PC-9 (cell line): ENCODE measurements at regions of chr1 and their contacts with region 1.

Region 1: GRCh38 chr1:233440951-233441401 is 113.5 kb downstream of the MAP3K21 start:
- DNase-seq: peak; percentile 47 to 72
- H3K4me3 ChIP-seq: no peak overlapping the region
- H3K27ac ChIP-seq: no peak overlapping the region
- H3K4me1 ChIP-seq: peaks cover 9% of the 10 kb centered on the region; the same call in 1 of the 2 replicates
- H3K27me3 ChIP-seq: no peaks in the 10 kb centered on the region
- CTCF ChIP-seq: peak; percentile 81

Region 2: GRCh38 chr1:233304489-233305102 is 136.4 kb before region 1 on chr1:
- CTCF ChIA-PET with region 1: no interaction called
- POLR2A ChIA-PET with region 1: no interaction called
- intact Hi-C with region 1: no loop called
- DNase-seq: no peak
- H3K4me3 ChIP-seq: no peak overlapping the region
- H3K27ac ChIP-seq: no peak overlapping the region
- H3K4me1 ChIP-seq: no peaks in the 10 kb centered on the region
- H3K27me3 ChIP-seq: no peaks in the 10 kb centered on the region
- CTCF ChIP-seq: peak; percentile 78

Region 3: GRCh38 chr1:233490488-233490887 is 49.5 kb after region 1 on chr1:
- CTCF ChIA-PET with region 1: no interaction called
- POLR2A ChIA-PET with region 1: no interaction called
- intact Hi-C with region 1: no loop called
- DNase-seq: no peak
- H3K4me3 ChIP-seq: no peak overlapping the region
- H3K27ac ChIP-seq: no peak overlapping the region
- H3K4me1 ChIP-seq: 0 out of 2 replicates have a peak, but pooled peaks cover 4% of the 10 kb centered on the region
- H3K27me3 ChIP-seq: no peaks in the 10 kb centered on the region
- CTCF ChIP-seq: no peak

Region 4: GRCh38 chr1:233656032-233656620 is 215.2 kb after region 1 on chr1:
- CTCF ChIA-PET with region 1: no interaction called
- POLR2A ChIA-PET with region 1: no interaction called
- intact Hi-C with region 1: loop called (anchors 10 kb)
- DNase-seq: peak; percentile 17 to 46
- H3K4me3 ChIP-seq: peak overlapping the region; percentile 37; the same call in 1 of the 2 replicates
- H3K27ac ChIP-seq: peak overlapping the region; percentile 96
- H3K4me1 ChIP-seq: peaks cover 75% of the 10 kb centered on the region
- H3K27me3 ChIP-seq: no peaks in the 10 kb centered on the region
- CTCF ChIP-seq: no peak

Region 5: GRCh38 chr1:233707153-233707879 is 266.3 kb after region 1 on chr1:
- CTCF ChIA-PET with region 1: interaction called, 5 read pairs
- POLR2A ChIA-PET with region 1: no interaction called
- intact Hi-C with region 1: loop called (anchors 10 kb)
- DNase-seq: peak; percentile 81 to 99
- H3K4me3 ChIP-seq: peak overlapping the region; percentile 26; the same call in 1 of the 2 replicates
- H3K27ac ChIP-seq: peak overlapping the region; percentile 84
- H3K4me1 ChIP-seq: peaks cover 67% of the 10 kb centered on the region
- H3K27me3 ChIP-seq: no peaks in the 10 kb centered on the region
- CTCF ChIP-seq: no peak

Region 6: GRCh38 chr1:233993651-233994050 is 552.7 kb after region 1 on chr1:
- CTCF ChIA-PET with region 1: interaction called, 5 read pairs
- POLR2A ChIA-PET with region 1: no interaction called
- intact Hi-C with region 1: loop called (anchors 5 kb)
- DNase-seq: peak; percentile 69 to 96
- H3K4me3 ChIP-seq: no peak overlapping the region
- H3K27ac ChIP-seq: peak overlapping the region; percentile 84
- H3K4me1 ChIP-seq: peaks cover 30% of the 10 kb centered on the region
- H3K27me3 ChIP-seq: no peaks in the 10 kb centered on the region
- CTCF ChIP-seq: no peak